IMR-90 (cell line): ENCODE measurements at regions of chr5 and their contacts with region 1.

Region 1: DNA sequence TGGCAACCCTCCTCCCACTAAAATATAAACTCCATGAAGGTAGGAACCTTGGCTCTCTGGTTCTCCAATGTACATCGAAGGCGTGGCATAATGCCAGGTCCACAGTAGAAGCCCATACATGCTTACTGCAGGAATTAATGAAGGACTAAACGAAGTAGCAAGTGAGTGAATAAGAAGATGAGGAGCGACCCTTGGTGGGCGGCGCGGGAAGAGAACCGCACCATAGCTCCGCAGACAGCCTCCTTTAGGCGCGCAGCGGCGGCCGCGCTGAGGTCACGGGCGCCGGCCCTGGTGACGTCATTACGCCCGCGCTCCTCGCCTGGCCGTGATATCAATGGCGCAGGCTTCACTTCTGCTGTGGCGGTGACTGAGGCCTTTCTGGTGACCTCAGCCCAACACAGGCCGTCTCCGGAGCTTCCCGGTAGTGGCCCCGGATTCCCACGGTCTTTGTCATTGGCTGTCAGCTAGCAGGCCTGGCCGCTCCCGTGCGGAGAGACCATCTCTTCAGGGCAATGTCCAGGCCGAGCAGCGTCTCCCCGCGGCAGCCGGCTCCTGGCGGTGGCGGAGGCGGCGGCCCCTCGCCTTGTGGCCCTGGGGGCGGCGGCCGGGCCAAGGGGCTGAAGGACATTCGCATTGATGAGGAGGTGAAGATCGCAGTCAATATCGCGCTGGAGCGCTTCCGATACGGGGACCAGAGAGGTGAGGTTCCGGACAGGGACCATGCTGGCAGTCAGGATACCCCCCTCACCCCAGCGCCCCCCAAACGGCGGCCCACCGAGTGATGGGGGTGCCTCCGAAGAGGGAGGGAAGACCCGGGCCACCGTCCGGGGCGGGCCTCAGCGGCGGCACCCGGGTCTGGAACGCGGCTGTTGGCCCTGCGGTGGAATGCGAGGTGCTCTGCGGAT is at the start of gene YTHDC2:
- DNase-seq: peak; percentile 87
- ATAC-seq: peak; percentile 97
- H3K4me3 ChIP-seq: peak within 1 kb of the TSS; percentile 60
- H3K27ac ChIP-seq: peak within 1 kb of the TSS; percentile 79
- H3K4me1 ChIP-seq: no peaks in the 10 kb centered on the region; the same call in 1 of the 2 replicates
- H3K27me3 ChIP-seq: no peaks in the 10 kb centered on the region
- CTCF ChIP-seq: peak; percentile 44
- POLR2A ChIP-seq: peak; percentile 81
- RAD21 ChIP-seq: peak; percentile 49
- total RNA-seq, gene YTHDC2: 13.4 and 22.5 TPM in 2 replicates

Region 2: GRCh38 chr5:113147101-113147508 is 366.5 kb before region 1 on chr5:
- CTCF ChIA-PET with region 1: no interaction called
- POLR2A ChIA-PET with region 1: no interaction called
- dilution Hi-C with region 1: no loop called
- in situ Hi-C with region 1: no loop called
- intact Hi-C with region 1: loop called (anchors 5 kb)
- DNase-seq: peak; percentile 99
- ATAC-seq: peak; percentile 80
- H3K4me3 ChIP-seq: no peak overlapping the region
- H3K27ac ChIP-seq: peak overlapping the region; percentile 89; the same call in 1 of the 2 replicates
- H3K4me1 ChIP-seq: peaks cover 25% of the 10 kb centered on the region
- H3K27me3 ChIP-seq: no peaks in the 10 kb centered on the region
- CTCF ChIP-seq: no peak
- POLR2A ChIP-seq: no peak
- RAD21 ChIP-seq: peak; percentile 16; the same call in 1 of the 2 replicates

Region 3: DNA sequence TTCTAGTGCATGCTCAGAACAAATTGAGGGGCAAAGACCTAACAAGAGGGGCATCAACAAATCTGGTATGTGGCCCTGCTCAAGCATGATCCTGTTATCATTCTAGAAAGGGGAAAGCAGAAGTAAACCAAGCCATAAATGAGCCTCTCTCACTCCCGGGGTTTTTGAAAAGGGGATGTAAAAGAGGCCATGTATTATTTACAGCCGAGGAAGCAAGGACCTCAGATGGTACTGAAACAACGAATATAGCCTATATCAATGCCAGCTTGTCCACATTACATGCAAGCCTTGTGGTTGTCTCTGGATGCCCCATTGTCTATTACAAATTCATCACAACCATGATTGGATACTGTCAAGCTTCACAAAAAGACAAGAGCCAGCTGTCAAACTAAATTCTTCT is 325.7 kb before region 1 on chr5:
- CTCF ChIA-PET with region 1: no interaction called
- POLR2A ChIA-PET with region 1: no interaction called
- dilution Hi-C with region 1: no loop called
- in situ Hi-C with region 1: no loop called
- intact Hi-C with region 1: no loop called
- DNase-seq: no peak
- ATAC-seq: no peak
- H3K4me3 ChIP-seq: no peak overlapping the region
- H3K27ac ChIP-seq: no peak overlapping the region
- H3K4me1 ChIP-seq: peaks cover 2% of the 10 kb centered on the region; the same call in 1 of the 2 replicates
- H3K27me3 ChIP-seq: no peaks in the 10 kb centered on the region
- CTCF ChIP-seq: no peak
- POLR2A ChIP-seq: no peak
- RAD21 ChIP-seq: no peak

Region 4: DNA sequence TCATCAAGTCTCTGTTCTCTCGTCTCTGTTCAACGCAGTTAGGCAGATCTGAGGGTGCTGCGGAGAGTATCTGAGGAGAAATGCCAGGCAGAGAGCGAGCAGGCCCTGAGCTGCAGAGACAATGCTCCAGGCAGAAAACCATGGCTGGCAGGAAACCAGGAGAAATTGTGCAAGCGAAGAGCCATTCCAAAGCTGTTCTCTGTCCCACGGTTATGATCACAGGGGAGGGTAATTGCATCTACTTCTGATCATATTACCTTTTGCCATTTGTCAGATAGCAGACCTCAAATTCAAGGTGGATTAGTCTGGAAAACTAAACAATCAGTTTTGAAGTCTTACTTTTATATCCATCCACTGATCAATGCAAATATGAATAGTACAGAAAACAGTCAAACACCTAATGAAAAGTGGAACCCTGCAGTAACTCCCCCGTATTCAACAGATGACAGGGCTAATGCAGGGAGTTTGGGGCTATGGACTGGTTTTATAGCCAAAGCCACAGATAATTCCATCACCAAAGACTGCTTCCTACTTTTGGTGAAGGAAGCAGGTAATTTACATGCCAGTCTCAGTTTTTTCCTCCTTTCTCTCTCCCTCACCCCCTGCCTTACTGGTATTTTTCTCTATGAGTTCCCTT is 309.0 kb before region 1 on chr5:
- CTCF ChIA-PET with region 1: no interaction called
- POLR2A ChIA-PET with region 1: no interaction called
- dilution Hi-C with region 1: no loop called
- in situ Hi-C with region 1: no loop called
- intact Hi-C with region 1: loop called (anchors 10 kb)
- DNase-seq: peak; percentile 64
- ATAC-seq: peak; percentile 30; the same call in 1 of the 2 replicates
- H3K4me3 ChIP-seq: no peak overlapping the region
- H3K27ac ChIP-seq: no peak overlapping the region
- H3K4me1 ChIP-seq: peaks cover 18% of the 10 kb centered on the region
- H3K27me3 ChIP-seq: no peaks in the 10 kb centered on the region
- CTCF ChIP-seq: no peak
- POLR2A ChIP-seq: no peak
- RAD21 ChIP-seq: no peak

Region 5: DNA sequence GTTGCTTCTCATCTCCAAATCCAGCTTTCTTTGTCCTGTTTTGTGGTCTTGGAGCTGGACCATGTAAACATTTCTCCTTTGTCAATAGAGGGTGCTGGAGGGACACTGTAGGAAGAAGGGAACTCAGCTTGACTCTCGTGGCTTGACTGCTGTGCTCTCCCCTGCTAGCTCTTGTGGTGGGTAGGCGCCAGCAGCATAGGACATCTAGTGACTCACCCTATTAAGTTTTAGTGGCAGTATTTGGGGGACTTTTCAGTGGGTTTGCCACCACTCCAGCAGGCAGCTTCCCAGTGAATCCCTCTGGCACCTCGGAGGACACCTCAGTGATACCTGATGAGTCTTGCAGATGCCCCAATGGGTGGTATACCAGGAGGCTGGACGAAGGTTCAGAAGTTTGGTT is 176.7 kb before region 1 on chr5:
- CTCF ChIA-PET with region 1: interaction called, 12 read pairs
- POLR2A ChIA-PET with region 1: interaction called, 14 read pairs
- dilution Hi-C with region 1: no loop called
- in situ Hi-C with region 1: no loop called
- intact Hi-C with region 1: loop called (anchors 1 kb)
- DNase-seq: peak; percentile 77
- ATAC-seq: peak; percentile 82
- H3K4me3 ChIP-seq: no peak overlapping the region
- H3K27ac ChIP-seq: no peak overlapping the region
- H3K4me1 ChIP-seq: peaks cover 4% of the 10 kb centered on the region; the same call in 1 of the 2 replicates
- H3K27me3 ChIP-seq: no peaks in the 10 kb centered on the region
- CTCF ChIP-seq: peak; percentile 55
- POLR2A ChIP-seq: no peak
- RAD21 ChIP-seq: peak; percentile 67

Region 6: DNA sequence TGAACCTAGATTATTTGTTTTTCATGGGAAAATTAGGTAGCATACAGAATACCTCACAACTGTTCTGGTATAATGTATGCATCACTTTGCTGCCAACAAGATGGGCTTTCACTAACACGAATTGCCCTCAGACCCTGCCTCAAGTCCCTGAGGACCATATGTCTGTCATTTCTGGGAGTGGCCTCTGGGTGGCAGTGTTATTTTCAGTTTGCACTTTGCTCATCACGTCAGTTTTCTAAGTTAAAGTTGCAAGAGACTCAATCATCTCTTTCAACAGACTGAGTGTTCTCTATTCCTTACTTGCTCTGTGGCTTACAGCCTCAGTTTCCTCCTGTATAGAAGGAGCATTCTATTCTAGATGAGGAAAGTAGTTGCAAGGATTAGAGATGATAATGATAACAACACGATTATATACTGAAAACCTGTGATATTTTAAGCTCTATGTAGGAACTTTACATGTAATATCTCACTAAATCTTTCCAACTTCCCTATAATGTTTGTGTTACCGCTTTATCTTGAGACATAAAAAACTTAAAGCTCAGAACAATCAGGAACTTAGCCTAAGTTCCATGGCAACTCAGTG is 134.6 kb before region 1 on chr5:
- CTCF ChIA-PET with region 1: interaction called, 5 read pairs
- POLR2A ChIA-PET with region 1: no interaction called
- dilution Hi-C with region 1: no loop called
- in situ Hi-C with region 1: no loop called
- intact Hi-C with region 1: loop called (anchors 1 kb)
- DNase-seq: peak; percentile 62
- ATAC-seq: peak; percentile 66
- H3K4me3 ChIP-seq: no peak overlapping the region
- H3K27ac ChIP-seq: peak overlapping the region; percentile 19; the same call in 1 of the 2 replicates
- H3K4me1 ChIP-seq: peaks cover 16% of the 10 kb centered on the region
- H3K27me3 ChIP-seq: no peaks in the 10 kb centered on the region
- CTCF ChIP-seq: peak; percentile 64
- POLR2A ChIP-seq: no peak
- RAD21 ChIP-seq: peak; percentile 61

Region 7: DNA sequence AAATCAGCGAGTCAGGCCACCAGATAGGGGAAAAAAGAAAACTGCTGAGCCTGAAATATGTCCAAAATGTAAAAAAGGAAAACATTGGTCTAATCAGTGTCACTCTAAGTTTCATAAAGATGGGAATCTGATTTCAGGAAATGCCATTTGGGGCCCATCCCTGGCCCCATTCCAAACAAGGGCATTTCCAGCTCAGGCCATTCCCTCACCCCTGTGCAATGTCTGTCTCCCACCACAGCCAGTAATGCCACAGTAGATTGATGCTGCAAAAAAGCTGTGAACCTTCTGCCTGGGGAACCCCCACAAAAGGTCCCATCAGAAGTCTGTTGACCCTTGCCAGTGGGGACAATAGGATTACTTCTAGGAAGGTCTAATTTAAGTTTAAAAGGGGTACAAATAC is 199.4 kb after region 1 on chr5:
- CTCF ChIA-PET with region 1: no interaction called
- POLR2A ChIA-PET with region 1: no interaction called
- dilution Hi-C with region 1: no loop called
- in situ Hi-C with region 1: no loop called
- intact Hi-C with region 1: no loop called
- DNase-seq: no peak
- ATAC-seq: no peak
- H3K4me3 ChIP-seq: no peak overlapping the region
- H3K27ac ChIP-seq: no peak overlapping the region
- H3K4me1 ChIP-seq: no peaks in the 10 kb centered on the region
- H3K27me3 ChIP-seq: no peaks in the 10 kb centered on the region
- CTCF ChIP-seq: no peak
- POLR2A ChIP-seq: no peak
- RAD21 ChIP-seq: no peak